ENCODE measurements at regions of chr12 and their contacts with region 1.

Region 1: DNA sequence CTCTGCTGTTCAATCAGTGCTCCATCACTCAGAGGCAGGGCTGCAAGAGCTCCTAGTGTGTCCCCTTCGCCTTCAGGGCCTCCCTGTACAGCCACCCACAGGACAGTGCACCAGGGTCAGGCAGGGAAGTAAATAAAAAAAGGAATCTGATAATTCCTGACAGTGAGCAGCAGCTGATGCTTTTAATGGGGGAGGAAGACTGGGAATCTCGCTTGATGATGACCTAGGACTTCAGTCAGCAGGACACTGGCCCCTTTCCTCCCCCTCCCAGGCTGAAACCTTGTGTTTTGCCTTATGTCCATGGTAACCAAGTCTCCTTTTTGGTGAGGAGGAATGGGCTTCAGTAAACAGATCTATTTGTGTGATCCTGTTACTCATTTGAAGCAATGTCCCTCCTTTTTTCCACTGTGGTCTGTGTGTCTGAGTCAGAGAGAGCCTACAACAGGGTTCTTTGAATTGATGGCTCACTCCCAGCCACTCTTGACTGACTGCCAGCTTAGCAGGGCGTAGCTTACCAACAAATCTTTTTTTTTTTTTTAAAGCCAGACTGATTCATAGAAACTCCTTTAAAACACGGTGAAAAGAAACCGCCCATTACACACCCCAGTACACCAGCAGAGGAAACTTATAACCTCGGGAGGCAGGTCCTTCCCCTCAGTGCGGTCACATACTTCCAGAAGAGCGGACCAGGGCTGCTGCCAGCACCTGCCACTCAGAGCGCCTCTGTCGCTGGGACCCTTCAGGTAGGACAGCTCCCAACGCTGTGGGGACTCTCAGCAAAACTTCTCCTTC is at the start of gene EMP1:
- DNase-seq: peak; percentile 96 to 99
- H3K4me3 ChIP-seq: peak within 1 kb of the TSS; percentile 50 to 70
- H3K27ac ChIP-seq: peak within 1 kb of the TSS; percentile 95 to 96
- H3K4me1 ChIP-seq: peaks cover 18 to 28% of the 10 kb centered on the region in 2 donors
- H3K27me3 ChIP-seq: no peaks in the 10 kb centered on the region
- CTCF ChIP-seq: peak in 1 of 4 experiments; percentile 21
- POLR2A ChIP-seq: peak; percentile 68 to 69
- total RNA-seq, gene EMP1: 48.9 to 345 (median 163) TPM

Region 2: GRCh38 chr12:12786716-12787601 is 409.4 kb before region 1 on chr12:
- intact Hi-C with region 1: loop called (anchors 5 kb)
- DNase-seq: peak; percentile 81 to 90
- H3K4me3 ChIP-seq: peak overlapping the region; percentile 66 to 82
- H3K27ac ChIP-seq: peak overlapping the region; percentile 96
- H3K4me1 ChIP-seq: peaks cover 0 to 7% of the 10 kb centered on the region in 2 donors
- H3K27me3 ChIP-seq: no peaks in the 10 kb centered on the region
- CTCF ChIP-seq: peak in 3 of 4 experiments; percentile 34 to 62 (median 41)
- POLR2A ChIP-seq: peak; percentile 84 to 90

Region 3: DNA sequence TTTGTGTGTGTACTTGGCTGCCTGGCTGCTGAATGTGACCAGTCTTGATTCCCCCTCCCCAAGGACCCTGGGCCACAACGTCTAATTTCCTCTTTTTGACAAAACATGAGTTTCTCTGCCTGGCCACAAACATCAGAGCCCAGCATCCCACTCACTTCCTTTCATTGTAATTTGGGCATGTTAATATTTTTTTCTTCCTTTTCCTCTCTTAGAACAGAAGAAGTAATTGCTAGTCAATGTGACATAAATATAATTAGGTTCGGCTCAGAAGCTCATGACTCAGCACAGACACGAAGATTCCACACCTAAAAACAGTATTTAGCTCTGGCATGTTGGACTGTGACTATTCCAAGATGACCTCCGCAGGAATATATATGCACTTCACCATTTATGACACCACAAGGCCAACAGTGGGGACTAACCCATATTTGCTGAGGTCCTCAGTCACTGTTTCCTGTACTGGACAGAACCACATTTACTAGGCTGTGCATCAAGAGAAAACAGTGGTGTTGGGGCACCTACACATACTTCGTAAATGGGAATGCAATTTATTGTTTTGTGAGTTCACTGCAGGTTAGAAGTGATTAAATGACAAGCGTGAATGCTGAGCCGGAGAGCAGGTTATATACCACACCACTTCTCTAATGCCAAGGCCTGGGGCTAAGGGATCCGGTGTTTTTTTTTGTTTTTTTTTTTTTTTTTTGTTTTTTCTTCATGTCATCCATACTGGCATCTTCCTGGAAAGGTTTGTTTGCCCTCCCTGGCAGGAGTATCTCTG is 97.1 kb before region 1 on chr12:
- intact Hi-C with region 1: loop called (anchors 5 kb)
- DNase-seq: peak in 1 of 2 donors; percentile 37
- H3K4me3 ChIP-seq: no peak overlapping the region
- H3K27ac ChIP-seq: peak overlapping the region; percentile 89 to 99
- H3K4me1 ChIP-seq: peaks cover 0 to 7% of the 10 kb centered on the region in 2 donors
- H3K27me3 ChIP-seq: no peaks in the 10 kb centered on the region
- CTCF ChIP-seq: no peak
- POLR2A ChIP-seq: no peak